ENCODE measurements at regions of chr3 and their contacts with region 1.

Region 1: GRCh38 chr3:188042466-188042865 is 111.5 kb upstream of the LPP start:
- DNase-seq: no peak
- H3K4me3 ChIP-seq: no peak overlapping the region
- H3K27ac ChIP-seq: no peak overlapping the region
- H3K4me1 ChIP-seq: peaks cover 5% of the 10 kb centered on the region
- H3K27me3 ChIP-seq: no peaks in the 10 kb centered on the region
- CTCF ChIP-seq: no peak
- POLR2A ChIP-seq: no peak

Region 2: GRCh38 chr3:188003188-188004171 is 39.0 kb before region 1 on chr3:
- intact Hi-C with region 1: loop called (anchors 1 kb)
- DNase-seq: no peak
- H3K4me3 ChIP-seq: no peak overlapping the region
- H3K27ac ChIP-seq: no peak overlapping the region
- H3K4me1 ChIP-seq: no peaks in the 10 kb centered on the region
- H3K27me3 ChIP-seq: no peaks in the 10 kb centered on the region
- CTCF ChIP-seq: no peak
- POLR2A ChIP-seq: no peak

Measured in vagina (tissue), 2 donors.